Posterior cingulate gyrus (tissue), 11 donors: ENCODE measurements at regions of chr6 and their contacts with region 1.

Region 1: GRCh38 chr6:121430514-121431460 is 4.7 kb upstream of the GJA1 start:
- DNase-seq: no peak

Region 2: DNA sequence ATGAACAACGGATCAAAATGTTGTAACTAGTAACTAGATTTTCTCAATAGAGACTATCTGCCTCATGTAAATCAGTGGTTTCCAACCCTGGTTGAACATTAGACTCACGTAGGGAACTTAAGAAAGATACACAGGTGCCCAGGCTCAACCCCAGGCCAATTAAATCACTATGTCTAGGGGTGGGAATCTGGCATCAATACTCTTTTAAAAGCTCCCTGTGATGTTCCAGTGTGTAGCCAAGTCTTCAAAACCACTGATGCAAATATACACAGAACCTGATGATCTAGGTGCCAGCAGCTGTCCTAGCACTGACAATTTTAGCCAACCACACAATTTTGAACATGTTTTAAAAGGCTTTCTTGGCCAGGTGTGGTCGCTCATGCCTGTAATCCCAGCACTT is 225.2 kb before region 1 on chr6:
- intact Hi-C with region 1: no loop called
- DNase-seq: no peak

Region 3: DNA sequence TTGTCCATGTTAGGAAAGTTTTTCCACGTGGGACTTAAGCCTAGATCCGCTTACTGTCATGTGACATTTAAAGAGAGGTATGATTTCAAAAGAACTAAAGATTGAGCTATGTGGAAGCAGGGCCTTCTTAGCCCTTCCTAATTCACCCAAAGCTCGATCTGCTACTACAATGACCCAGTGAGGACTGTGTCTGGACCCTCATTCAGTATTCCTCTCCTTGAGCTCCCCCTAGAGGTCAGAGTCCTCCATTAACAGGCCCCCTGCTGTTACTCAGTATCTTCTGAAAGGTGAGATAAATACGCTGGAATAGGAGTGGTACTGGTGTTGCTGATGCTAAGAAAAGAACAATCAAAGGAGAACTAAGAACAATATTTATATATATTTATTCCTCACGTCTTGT is 418.7 kb after region 1 on chr6:
- intact Hi-C with region 1: loop called (anchors 5 kb)
- DNase-seq: peak in 1 of 10 donors; percentile 19

Region 4: GRCh38 chr6:121932076-121932991 is 501.5 kb after region 1 on chr6:
- intact Hi-C with region 1: no loop called
- DNase-seq: no peak

Region 5: DNA sequence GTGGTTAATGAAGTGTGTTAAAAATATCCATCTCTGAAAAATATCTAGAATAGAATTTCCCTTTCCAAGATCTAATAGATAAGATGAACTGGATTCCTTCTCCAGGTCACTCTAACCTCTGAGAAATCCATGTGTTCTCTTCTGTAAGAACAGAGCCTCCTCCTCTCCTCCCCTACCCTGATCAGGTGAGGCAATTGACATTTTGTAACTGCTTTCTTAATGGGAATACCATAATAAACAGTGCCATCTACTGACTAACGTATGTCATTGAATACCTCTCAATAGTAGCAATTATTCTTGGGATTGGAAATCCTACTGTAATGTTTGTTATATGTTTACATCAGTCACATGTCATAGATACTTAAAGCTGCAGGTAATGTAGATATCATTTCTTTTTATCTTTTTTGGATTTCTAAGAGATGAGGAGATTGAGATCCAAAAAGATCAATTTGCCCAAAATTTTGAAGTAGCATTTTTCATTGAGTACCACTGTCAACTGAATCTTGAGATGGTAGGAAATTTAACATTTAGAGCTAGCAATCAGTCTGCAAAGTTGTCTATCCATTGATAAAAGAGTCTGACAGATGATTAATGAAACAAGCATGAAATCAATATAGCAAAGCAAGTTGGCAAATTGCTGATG is 602.9 kb after region 1 on chr6:
- intact Hi-C with region 1: loop called (anchors 2 kb)
- DNase-seq: no peak

Region 6: DNA sequence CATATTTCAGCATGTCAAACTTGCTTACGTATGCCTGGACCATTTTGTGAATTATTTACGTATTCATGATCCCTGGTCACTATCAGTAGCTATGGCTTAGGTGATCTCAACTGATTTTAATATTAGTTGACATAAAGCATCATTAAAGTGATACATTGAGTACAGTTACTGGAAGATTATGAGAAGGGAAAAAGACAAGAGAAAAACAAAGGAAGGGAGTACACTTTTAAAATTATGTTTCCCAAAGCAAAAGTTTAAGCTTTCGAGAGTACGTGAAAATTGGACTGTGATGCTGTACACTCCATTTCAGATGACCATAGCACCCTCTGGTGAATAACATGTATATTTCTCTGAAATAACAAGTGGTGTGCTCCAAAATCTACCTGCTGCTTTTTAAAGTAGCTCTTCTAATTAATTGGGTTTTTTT is 753.6 kb after region 1 on chr6:
- intact Hi-C with region 1: loop called (anchors 5 kb)
- DNase-seq: no peak

Region 7: GRCh38 chr6:122289762-122290539 is 859.2 kb after region 1 on chr6:
- intact Hi-C with region 1: loop called (anchors 5 kb)
- DNase-seq: no peak

Region 8: DNA sequence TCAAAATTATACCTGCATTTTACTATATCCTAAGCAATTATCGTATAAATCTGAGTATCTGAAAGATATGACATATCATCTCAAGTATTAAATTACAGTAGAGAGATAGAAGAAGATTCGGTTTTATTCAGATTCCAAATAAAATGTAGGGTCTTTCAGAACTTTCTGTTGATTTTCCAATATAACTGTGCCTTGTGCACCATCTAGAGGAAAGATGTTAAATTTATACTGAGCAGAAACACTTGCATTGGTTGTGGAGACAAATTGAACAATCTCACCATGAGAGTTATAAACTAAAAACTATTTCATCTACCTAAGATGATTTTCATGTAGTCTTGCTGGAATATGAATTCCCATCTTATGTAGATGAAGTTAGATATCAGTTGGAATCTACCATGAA is 941.9 kb after region 1 on chr6:
- intact Hi-C with region 1: loop called (anchors 10 kb)
- DNase-seq: no peak